WTC11 (cell line): ENCODE measurements at regions of chr15 and their contacts with region 1.

Region 1: GRCh38 chr15:65336493-65337455 is 32.3 kb downstream of the RNU5B-1 start:
- DNase-seq: no peak
- ATAC-seq: peak; percentile 40
- H3K4me3 Mint-ChIP-seq: no peak overlapping the region
- H3K27ac Mint-ChIP-seq: peak overlapping the region; percentile 45; the same call in 1 of the 2 replicates
- H3K4me1 Mint-ChIP-seq: peaks cover 76% of the 10 kb centered on the region
- H3K27me3 Mint-ChIP-seq: no peaks in the 10 kb centered on the region
- CTCF ChIP-seq: no peak

Region 2: GRCh38 chr15:65377104-65377975 is 40.6 kb after region 1 on chr15:
- CTCF ChIA-PET with region 1: interaction called, 64 read pairs
- POLR2A ChIA-PET with region 1: no interaction called
- DNase-seq: peak; percentile 74
- ATAC-seq: peak; percentile 41
- H3K4me3 Mint-ChIP-seq: peak overlapping the region; percentile 94
- H3K27ac Mint-ChIP-seq: no peak overlapping the region; the same call in none of the 2 replicates
- H3K4me1 Mint-ChIP-seq: peaks cover 44% of the 10 kb centered on the region
- H3K27me3 Mint-ChIP-seq: peaks cover 24% of the 10 kb centered on the region
- CTCF ChIP-seq: no peak